Breast epithelium (tissue), 4 donors: ENCODE measurements at regions of chr1 and their contacts with region 1.

Region 1: GRCh38 chr1:6935361-6935883 is 150.2 kb downstream of the CAMTA1 start:
- DNase-seq: no peak
- H3K4me3 ChIP-seq: peak overlapping the region in 1 of 3 donors; percentile 40
- H3K27ac ChIP-seq: no peak overlapping the region
- H3K4me1 ChIP-seq: no peaks in the 10 kb centered on the region
- H3K27me3 ChIP-seq: no peaks in the 10 kb centered on the region
- CTCF ChIP-seq: no peak
- POLR2A ChIP-seq: no peak

Region 2: DNA sequence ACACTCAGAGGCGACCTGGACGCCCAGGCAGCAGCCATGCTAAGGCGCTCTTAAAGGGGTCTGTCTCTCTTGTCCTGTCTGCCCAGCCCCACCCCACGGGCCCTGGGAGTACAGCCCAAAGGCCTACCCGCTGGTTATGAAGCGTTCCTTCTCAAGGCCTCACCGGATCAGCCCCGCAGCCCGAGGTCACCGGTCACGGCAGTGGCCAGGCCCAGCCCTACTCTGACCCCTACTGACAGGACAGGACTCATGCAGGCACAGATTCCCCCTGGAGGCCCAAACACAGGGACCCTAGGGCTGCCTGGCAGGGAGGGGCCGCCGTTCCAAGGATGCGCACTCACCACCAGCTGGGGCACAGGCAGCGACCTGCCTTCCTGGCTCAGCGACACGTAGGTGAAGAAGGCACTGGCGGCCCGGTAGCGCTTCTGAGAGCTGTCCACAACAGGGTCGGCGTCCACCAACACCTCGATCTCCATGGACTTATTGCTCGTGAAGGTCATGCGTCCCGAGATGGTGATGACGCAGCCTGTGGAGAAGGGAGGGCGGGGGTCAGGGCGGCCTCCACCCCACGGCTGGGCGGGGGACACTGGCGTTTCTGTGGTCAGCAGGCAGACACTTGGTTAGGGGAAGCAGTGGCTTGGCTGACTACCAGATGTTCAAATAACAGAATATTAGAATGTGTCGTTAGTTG is 654.5 kb before region 1 on chr1:
- intact Hi-C with region 1: loop called (anchors 5 kb)
- DNase-seq: no peak
- H3K4me3 ChIP-seq: no peak overlapping the region
- H3K27ac ChIP-seq: no peak overlapping the region
- H3K4me1 ChIP-seq: no peaks in the 10 kb centered on the region
- H3K27me3 ChIP-seq: no peaks in the 10 kb centered on the region
- CTCF ChIP-seq: no peak
- POLR2A ChIP-seq: no peak

Region 3: DNA sequence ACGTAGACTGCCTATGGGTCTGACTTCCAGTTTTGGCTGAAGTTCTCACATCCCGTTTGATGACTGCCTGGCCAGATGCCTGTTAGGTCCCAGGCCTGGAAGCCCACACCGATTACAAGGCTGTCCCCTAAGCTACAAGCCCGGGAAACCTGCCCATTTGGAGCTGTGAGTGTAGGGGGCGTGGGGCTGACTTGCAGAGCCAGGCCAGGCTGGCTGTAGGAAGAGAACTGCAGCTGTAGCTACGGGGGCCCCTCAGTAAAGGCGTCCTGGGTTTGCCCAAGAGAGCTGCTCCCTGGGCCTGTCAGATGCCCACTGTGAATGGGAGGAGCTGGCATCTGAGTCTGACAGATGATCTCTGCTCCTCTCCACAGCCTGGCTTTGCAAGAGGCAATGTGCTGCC is 49.6 kb after region 1 on chr1:
- intact Hi-C with region 1: no loop called
- DNase-seq: peak in 1 of 2 donors; percentile 42
- H3K4me3 ChIP-seq: no peak overlapping the region
- H3K27ac ChIP-seq: no peak overlapping the region
- H3K4me1 ChIP-seq: no peaks in the 10 kb centered on the region
- H3K27me3 ChIP-seq: no peaks in the 10 kb centered on the region
- CTCF ChIP-seq: no peak
- POLR2A ChIP-seq: no peak